Mammary epithelial cell (primary cell): ENCODE measurements at regions of chr3 and their contacts with region 1.

Region 1: DNA sequence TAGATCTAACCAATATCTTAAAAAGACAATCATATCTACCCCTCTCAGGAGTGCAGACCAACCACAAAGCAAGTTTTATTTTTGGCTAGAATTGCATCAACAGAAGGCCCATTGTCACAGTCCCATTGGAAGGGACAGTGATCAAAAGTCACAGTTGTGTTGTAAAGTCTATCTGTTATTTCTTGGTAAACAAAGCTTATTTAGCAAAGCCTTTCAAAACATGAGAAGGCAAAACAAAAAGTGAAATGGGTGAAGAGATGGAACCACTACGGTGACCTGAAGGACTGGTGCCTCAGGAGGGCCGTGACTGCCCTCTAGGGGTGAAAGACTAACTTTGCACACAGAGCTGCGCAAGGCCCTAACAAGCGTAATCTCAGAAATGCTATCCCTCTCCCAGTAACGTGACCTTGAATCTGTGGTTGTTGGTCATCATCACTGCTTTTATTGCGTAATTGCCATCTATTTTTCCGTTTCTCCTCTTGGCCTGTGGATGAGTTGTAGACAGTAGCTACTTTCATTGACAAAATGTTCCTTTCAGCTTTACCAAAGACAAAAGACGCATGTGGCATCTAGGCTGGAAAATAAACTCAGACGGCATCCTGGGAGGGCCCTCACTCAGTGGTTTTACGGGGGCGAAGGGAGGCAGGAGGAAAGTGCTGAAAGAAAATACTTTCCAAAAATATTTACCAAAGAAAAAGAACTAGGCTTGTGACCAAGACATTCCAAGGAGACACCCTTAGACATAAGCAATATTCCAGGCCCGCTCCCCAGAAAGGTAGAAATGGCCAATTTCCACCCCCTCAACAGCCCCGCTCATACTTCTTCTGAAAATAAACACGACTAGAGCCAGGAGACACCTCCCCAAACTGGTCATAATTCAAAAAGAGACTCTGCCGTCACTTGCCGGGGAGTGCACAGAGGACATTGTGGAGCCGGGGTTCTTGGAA is 79.4 kb downstream of the FRMD4B start:
- DNase-seq: peak; percentile 89
- H3K4me3 ChIP-seq: no peak overlapping the region
- H3K27ac ChIP-seq: peak overlapping the region; percentile 47
- H3K4me1 ChIP-seq: peaks cover 3% of the 10 kb centered on the region
- H3K27me3 ChIP-seq: no peaks in the 10 kb centered on the region
- CTCF ChIP-seq: peak; percentile 91 to 94

Region 2: DNA sequence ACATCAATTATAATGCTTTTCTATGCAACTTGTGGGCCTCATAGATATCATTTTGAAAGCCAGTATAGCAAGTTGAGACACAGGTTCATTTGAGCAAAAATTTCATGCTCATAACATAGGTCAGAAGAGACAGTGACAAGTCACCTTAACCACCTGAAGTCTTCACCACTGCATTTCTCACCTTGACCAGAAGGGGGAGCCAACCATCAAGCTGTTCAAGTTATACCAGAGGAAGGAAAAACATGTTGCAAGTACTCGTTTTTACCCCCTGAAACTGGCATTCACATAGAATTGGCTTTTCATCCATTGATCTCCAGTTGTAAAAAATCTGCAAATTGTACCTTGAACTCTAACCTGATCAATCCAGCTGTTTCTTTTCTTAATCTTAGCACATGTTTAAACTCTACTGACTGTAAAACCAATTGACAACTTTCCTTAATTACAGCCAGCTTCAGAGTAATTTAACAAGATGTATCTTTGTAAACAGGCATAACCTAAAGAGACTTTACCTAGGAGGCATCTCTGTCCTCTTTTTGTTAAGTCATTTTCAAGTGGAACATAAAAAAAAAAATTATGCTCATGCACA is 185.5 kb before region 1 on chr3:
- CTCF ChIA-PET with region 1: no interaction called
- dilution Hi-C with region 1: no loop called
- in situ Hi-C with region 1: no loop called
- intact Hi-C with region 1: loop called (anchors 2 kb)
- DNase-seq: peak; percentile 67
- H3K4me3 ChIP-seq: no peak overlapping the region
- H3K27ac ChIP-seq: no peak overlapping the region
- H3K4me1 ChIP-seq: peaks cover 12% of the 10 kb centered on the region
- H3K27me3 ChIP-seq: no peaks in the 10 kb centered on the region
- CTCF ChIP-seq: peak; percentile 96 to 99

Region 3: GRCh38 chr3:69161587-69162307 is 144.8 kb before region 1 on chr3:
- CTCF ChIA-PET with region 1: interaction called, 6 read pairs
- dilution Hi-C with region 1: loop called (anchors 25 kb)
- in situ Hi-C with region 1: loop called in 1 of 2 experiments (anchors 5 kb)
- intact Hi-C with region 1: loop called (anchors 1 kb)
- DNase-seq: peak; percentile 47
- H3K4me3 ChIP-seq: no peak overlapping the region
- H3K27ac ChIP-seq: no peak overlapping the region
- H3K4me1 ChIP-seq: no peaks in the 10 kb centered on the region
- H3K27me3 ChIP-seq: no peaks in the 10 kb centered on the region
- CTCF ChIP-seq: peak; percentile 90 to 93

Region 4: DNA sequence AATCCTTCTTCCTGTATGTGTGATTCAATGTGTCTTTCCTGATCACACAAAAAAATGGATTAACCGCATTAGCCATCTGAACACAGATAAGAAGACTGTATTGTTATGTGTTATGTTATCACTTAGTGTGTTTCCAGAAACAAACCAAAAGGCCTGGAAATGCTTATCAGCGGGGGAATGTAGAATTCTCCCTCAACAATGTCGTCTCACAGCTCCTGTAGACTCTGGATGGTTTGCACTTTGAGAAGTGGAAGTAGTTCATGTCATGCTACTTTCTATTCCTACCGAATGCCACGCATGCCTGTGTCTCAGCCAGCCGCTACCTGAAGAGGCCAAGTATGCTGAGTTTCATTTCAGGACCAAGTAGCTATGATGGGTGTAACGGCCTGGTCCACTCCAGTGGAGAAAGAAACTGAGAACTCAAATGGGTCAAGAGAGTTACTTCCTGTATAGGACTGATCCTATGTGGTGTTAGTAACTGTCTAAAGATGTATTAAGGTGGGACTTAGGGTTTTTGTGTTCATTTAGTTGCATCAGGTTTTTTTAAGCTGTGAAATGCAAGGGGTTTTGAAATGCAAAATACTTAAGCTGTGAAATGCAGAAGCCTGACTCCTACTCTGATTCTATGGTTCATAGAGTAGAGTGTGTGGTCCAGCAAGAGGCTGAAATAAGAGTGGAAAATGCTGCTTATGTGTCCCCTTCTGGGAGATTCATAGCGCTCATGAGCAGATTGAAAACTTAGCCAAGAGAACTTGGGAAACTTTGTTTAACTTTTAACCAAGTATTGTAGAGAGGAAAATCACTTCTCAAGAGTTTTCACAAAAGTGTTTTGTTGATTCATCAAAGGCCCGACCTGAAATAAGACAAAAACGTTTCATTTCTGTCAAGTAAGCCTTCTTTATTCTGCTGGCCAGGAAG is 65.6 kb before region 1 on chr3:
- CTCF ChIA-PET with region 1: no interaction called
- dilution Hi-C with region 1: no loop called
- in situ Hi-C with region 1: no loop called
- intact Hi-C with region 1: no loop called
- DNase-seq: no peak
- H3K4me3 ChIP-seq: no peak overlapping the region
- H3K27ac ChIP-seq: no peak overlapping the region
- H3K4me1 ChIP-seq: no peaks in the 10 kb centered on the region
- H3K27me3 ChIP-seq: no peaks in the 10 kb centered on the region
- CTCF ChIP-seq: no peak

Region 5: DNA sequence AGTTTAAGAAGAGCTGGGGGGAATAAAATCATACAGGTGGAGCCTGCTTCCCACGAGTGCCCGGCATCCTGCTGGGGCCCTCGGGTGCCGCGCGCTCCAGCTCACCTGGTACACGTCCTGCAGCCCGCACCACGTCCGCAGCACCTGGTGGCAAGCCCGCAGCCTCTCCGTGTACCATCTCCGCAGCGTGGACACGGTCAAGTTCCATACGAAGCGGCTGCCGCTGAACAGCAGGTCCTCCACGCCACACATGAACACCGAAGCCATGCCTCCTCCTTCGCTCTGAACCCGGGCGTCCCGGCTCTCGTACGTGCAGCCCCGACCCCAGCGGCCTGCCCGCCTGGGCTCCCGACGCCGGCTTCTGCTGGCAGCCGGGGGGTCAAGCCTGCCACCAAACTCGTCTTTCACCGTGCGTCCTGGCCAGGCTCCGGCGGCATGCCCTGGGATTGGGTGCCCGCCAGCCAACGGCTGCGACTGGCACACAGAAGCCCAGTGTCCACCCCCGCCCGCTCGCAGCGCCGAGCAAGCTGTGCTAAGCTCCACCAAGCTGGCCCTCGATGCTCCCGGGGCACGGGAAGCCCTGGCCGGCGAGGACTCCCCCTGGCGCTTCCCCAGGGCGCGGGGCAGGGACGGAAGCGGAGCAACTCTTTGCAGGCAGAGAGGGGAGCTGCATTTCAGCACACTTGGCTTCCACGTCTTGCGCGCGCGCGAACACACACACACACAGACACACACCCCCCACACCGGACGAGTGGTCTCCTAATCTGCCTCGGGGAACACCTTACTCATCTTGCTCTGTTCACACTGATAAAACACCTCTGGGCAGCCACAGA is 79.4 kb after region 1 on chr3 and contains the start of gene FRMD4B:
- CTCF ChIA-PET with region 1: interaction called, 5 read pairs
- dilution Hi-C with region 1: no loop called
- in situ Hi-C with region 1: no loop called
- intact Hi-C with region 1: loop called (anchors 2 kb)
- DNase-seq: peak; percentile 65
- H3K4me3 ChIP-seq: peak within 1 kb of the TSS; percentile 32 to 68 (median 59)
- H3K27ac ChIP-seq: peak within 1 kb of the TSS; percentile 76
- H3K4me1 ChIP-seq: peaks cover 41% of the 10 kb centered on the region
- H3K27me3 ChIP-seq: no peaks in the 10 kb centered on the region
- CTCF ChIP-seq: peak; percentile 16 to 43
- total RNA-seq, gene FRMD4B: 42.0 to 64.1 TPM

Region 6: DNA sequence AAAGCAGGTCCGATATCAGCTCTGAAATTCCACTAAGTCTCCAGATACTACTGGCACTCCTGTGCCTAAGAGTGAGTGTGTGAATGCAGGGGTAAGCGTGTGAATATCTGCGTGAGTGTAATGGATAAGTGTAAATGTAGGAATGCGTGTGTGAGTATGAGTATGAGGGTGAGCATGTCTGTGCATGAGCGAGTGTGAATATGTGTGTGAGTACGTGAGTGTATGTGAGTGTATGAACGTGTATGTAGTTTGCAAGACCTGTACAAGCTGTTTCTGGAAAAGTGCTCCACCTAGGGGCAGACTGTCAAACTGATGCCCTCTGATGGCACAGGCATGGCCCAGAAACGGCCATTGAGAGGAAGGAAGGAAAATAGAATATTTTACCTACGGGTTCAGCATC is 103.7 kb after region 1 on chr3:
- CTCF ChIA-PET with region 1: interaction called, 3 read pairs
- dilution Hi-C with region 1: no loop called
- in situ Hi-C with region 1: loop called in 1 of 2 experiments (anchors 25 kb)
- intact Hi-C with region 1: loop called (anchors 1 kb)
- DNase-seq: peak; percentile 64
- H3K4me3 ChIP-seq: no peak overlapping the region
- H3K27ac ChIP-seq: peak overlapping the region; percentile 94
- H3K4me1 ChIP-seq: peaks cover 35% of the 10 kb centered on the region
- H3K27me3 ChIP-seq: no peaks in the 10 kb centered on the region
- CTCF ChIP-seq: peak; percentile 87 to 96

Region 7: DNA sequence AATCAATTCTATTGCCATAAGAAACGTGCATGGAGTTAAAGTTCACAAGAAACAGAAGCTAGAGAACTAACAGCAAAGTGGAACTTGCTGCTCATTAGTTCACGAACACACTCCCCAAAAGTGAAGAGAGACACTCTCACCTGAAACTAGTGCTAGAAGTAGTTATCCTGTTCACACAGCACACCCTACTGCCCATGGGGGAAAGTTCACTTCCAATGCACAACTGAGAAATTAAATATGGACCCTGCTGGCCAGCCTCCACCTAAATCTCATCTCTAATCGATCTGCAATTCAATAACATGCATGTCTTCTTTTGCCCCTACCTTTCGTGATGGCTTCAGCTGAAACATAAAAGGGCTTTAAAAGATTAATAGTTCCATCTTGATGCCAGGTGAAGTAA is 118.7 kb after region 1 on chr3:
- CTCF ChIA-PET with region 1: no interaction called
- dilution Hi-C with region 1: no loop called
- in situ Hi-C with region 1: loop called in 1 of 2 experiments (anchors 25 kb)
- intact Hi-C with region 1: loop called (anchors 2 kb)
- DNase-seq: peak; percentile 37
- H3K4me3 ChIP-seq: no peak overlapping the region
- H3K27ac ChIP-seq: no peak overlapping the region
- H3K4me1 ChIP-seq: peaks cover 36% of the 10 kb centered on the region
- H3K27me3 ChIP-seq: no peaks in the 10 kb centered on the region
- CTCF ChIP-seq: peak; percentile 67 to 73

Region 8: GRCh38 chr3:69542221-69543079 is 235.9 kb after region 1 on chr3:
- CTCF ChIA-PET with region 1: no interaction called
- dilution Hi-C with region 1: no loop called
- in situ Hi-C with region 1: no loop called
- intact Hi-C with region 1: loop called (anchors 10 kb)
- DNase-seq: peak; percentile 67
- H3K4me3 ChIP-seq: peak overlapping the region; percentile 77 to 89 (median 88)
- H3K27ac ChIP-seq: peak overlapping the region; percentile 94
- H3K4me1 ChIP-seq: peaks cover 20% of the 10 kb centered on the region
- H3K27me3 ChIP-seq: no peaks in the 10 kb centered on the region
- CTCF ChIP-seq: no peak